ENCODE measurements at regions of chr12 and their contacts with region 1.

Region 1: GRCh38 chr12:120257041-120257821 is 8.3 kb downstream of the PXN start:
- DNase-seq: no peak
- H3K4me3 ChIP-seq: no peak overlapping the region
- H3K4me3 Mint-ChIP-seq: peak overlapping the region in 5 of 7 donors; percentile 11 to 58 (median 28)
- H3K27ac ChIP-seq: no peak overlapping the region
- H3K27ac Mint-ChIP-seq: peak overlapping the region; percentile 65 to 98 (median 83)
- H3K4me1 ChIP-seq: peaks cover 93% of the 10 kb centered on the region
- H3K4me1 Mint-ChIP-seq: peaks cover 84 to 96% (median 95%) of the 10 kb centered on the region in 3 donors
- H3K27me3 ChIP-seq: no peaks in the 10 kb centered on the region
- H3K27me3 Mint-ChIP-seq: no peaks in the 10 kb centered on the region

Region 2: DNA sequence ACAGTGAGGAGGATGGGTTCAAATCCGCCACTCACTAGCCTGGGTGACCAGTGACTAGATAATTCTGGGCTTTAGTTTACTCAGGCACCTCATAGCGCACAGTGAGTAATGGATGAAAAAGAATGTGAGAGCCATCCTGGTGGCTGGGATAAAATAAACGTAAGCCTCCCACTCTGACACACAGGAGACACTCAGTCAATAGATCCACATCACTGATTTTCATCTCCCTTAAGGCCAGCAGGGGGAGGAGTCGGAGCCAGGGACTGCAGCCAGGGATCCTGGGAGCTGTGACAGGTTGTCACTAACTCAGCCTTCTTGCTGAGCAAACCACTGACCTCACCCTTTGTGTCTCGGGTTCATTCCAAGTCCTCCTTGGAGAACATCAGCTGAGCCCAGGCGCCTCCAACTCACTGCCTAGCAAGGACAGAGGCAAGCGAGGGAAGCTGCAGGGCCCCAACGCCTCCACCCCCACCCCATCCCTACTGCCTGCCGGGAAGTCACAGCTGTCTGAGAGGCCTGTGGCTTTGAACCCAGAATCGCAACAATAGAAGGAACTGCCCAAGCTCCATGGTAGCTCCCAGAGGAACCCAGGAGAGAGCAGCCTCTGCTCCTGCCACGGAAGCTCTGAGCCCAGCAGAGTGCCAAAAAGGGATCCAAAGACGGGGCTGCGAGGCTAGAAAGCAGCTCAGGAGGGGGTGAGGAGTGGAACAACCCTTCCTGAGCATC is 22.4 kb before region 1 on chr12:
- CTCF ChIA-PET with region 1: interaction called, 727 read pairs
- POLR2A ChIA-PET with region 1: interaction called, 101 read pairs
- DNase-seq: no peak
- H3K4me3 ChIP-seq: no peak overlapping the region
- H3K4me3 Mint-ChIP-seq: peak overlapping the region in 2 of 7 donors; percentile 12 to 34
- H3K27ac ChIP-seq: peak overlapping the region; percentile 45
- H3K27ac Mint-ChIP-seq: peak overlapping the region in 7 of 8 donors; percentile 37 to 94 (median 84)
- H3K4me1 ChIP-seq: peaks cover 94% of the 10 kb centered on the region
- H3K4me1 Mint-ChIP-seq: peaks cover 82 to 90% (median 84%) of the 10 kb centered on the region in 3 donors
- H3K27me3 ChIP-seq: no peaks in the 10 kb centered on the region
- H3K27me3 Mint-ChIP-seq: no peaks in the 10 kb centered on the region

Measured in CD8-positive, alpha-beta memory T cell (primary cell).